Naive thymus-derived CD8-positive, alpha-beta T cell (primary cell): ENCODE measurements at regions of chr15 and their contacts with region 1.

Region 1: DNA sequence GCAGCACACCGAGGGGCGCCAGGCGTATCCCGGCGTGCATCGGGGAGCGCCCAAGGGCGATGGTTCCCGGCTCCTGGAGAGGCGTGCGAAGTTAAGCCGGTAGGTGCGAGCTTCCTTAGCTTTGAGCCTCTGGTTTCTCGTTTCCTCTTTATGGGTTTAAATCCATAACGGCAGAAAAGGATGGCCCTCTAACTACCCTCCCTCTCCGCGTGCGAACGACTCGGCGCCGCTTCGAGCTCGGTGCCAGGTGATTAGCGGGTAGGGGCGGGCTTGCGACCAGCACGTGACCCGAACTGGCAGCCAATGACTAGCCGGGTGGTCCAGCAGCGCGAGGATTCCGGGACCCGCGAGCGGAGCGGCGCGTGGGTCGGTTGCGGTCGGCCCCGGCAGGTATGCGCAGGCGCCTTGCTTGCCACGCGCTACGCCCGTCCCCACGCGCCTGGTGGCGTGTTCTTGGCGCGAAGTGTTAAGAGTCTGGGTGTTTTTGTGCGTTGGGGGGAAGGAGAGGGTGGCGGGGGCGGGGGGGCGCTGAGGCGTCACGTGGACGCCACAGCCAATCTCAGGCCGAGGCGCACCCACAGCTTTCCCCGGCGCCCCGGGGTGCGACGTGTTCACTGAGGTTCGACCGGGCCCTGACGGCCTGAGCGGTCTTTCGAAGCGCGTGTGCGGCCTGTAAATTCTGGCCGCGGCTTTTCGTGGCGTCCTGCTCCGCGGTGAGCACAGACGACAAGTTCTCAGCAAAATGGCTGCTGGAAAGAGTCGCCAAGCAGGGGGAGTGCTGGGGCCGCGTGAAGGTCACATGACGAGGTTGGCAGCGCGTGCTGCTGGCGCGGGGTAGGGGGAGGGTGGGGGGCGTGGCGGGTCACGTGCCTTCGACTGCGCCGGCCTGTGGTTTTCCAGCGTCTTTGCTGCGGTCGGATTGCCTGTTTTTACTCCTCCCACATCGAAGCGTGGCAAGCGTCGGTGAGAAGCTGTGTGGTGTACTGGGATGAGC is 38.7 kb upstream of the MGA start:
- DNase-seq: peak; percentile 65 to 91 (median 80)
- ATAC-seq: peak; percentile 85 to 87
- H3K4me3 Mint-ChIP-seq: peak overlapping the region; percentile 72 to 85 (median 80)
- H3K27ac Mint-ChIP-seq: peak overlapping the region; percentile 51 to 91 (median 88)
- H3K4me1 Mint-ChIP-seq: peaks cover 5 to 22% (median 14%) of the 10 kb centered on the region in 4 donors
- H3K27me3 Mint-ChIP-seq: no peaks in the 10 kb centered on the region

Region 2: DNA sequence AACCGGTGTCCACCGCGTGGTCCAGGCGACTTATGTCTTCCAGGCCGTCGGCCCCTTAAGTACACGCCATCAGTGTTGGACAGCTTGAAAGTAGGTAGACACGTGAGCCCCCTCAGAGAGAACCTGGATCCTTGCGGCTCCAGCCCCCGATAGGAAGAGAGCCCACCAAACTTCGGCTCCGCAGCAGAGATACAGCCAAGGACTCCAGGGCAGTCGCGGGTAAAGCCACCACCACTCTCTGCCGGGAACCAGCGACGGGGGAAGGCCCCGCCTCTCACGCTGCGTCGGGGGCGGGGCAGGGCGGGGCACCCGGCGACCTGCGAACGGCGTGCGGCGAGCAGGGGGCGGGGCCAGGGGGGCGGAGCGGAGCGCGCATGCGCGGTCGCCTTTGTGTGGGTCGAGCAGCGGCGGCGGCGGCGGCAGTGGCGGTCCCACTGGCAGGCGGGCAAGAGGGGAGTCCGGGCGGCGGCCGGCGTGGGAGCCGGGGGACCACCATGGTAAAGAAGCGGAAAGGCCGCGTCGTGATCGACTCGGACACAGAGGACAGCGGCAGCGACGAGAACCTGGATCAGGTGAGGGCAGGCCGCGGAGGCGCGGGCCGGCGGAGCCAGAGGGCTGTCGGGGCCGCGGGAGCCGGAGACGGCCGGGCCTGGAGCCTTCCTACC is 204.6 kb before region 1 on chr15 and contains the start of gene RTF1:
- POLR2A ChIA-PET with region 1: no interaction called
- DNase-seq: peak; percentile 92 to 100 (median 97)
- ATAC-seq: peak; percentile 94 to 96
- H3K4me3 Mint-ChIP-seq: peak within 1 kb of the TSS; percentile 90 to 97 (median 95)
- H3K27ac Mint-ChIP-seq: peak within 1 kb of the TSS; percentile 93 to 97 (median 96)
- H3K4me1 Mint-ChIP-seq: peaks cover 24 to 49% (median 45%) of the 10 kb centered on the region in 4 donors
- H3K27me3 Mint-ChIP-seq: no peaks in the 10 kb centered on the region
- polyA plus RNA-seq, gene RTF1: 17.1 to 21.7 (median 19.2) TPM

Region 3: GRCh38 chr15:41585127-41586047 is 36.1 kb before region 1 on chr15:
- POLR2A ChIA-PET with region 1: no interaction called
- DNase-seq: peak in 6 of 10 donors; percentile 6 to 28 (median 17)
- ATAC-seq: peak; percentile 75 to 79
- H3K4me3 Mint-ChIP-seq: peak overlapping the region; percentile 71 to 86 (median 80)
- H3K27ac Mint-ChIP-seq: peak overlapping the region in 1 of 10 donors; percentile 29
- H3K4me1 Mint-ChIP-seq: peaks cover 5 to 8% (median 6%) of the 10 kb centered on the region in 4 donors
- H3K27me3 Mint-ChIP-seq: peaks cover 19 to 46% (median 30%) of the 10 kb centered on the region in 5 donors

Region 4: GRCh38 chr15:41610048-41610447 is 11.4 kb before region 1 on chr15:
- POLR2A ChIA-PET with region 1: no interaction called
- DNase-seq: no peak
- ATAC-seq: no peak
- H3K4me3 Mint-ChIP-seq: no peak overlapping the region
- H3K27ac Mint-ChIP-seq: no peak overlapping the region
- H3K4me1 Mint-ChIP-seq: no peaks in the 10 kb centered on the region
- H3K27me3 Mint-ChIP-seq: peaks cover 0 to 7% (median 4%) of the 10 kb centered on the region in 5 donors

Region 5: DNA sequence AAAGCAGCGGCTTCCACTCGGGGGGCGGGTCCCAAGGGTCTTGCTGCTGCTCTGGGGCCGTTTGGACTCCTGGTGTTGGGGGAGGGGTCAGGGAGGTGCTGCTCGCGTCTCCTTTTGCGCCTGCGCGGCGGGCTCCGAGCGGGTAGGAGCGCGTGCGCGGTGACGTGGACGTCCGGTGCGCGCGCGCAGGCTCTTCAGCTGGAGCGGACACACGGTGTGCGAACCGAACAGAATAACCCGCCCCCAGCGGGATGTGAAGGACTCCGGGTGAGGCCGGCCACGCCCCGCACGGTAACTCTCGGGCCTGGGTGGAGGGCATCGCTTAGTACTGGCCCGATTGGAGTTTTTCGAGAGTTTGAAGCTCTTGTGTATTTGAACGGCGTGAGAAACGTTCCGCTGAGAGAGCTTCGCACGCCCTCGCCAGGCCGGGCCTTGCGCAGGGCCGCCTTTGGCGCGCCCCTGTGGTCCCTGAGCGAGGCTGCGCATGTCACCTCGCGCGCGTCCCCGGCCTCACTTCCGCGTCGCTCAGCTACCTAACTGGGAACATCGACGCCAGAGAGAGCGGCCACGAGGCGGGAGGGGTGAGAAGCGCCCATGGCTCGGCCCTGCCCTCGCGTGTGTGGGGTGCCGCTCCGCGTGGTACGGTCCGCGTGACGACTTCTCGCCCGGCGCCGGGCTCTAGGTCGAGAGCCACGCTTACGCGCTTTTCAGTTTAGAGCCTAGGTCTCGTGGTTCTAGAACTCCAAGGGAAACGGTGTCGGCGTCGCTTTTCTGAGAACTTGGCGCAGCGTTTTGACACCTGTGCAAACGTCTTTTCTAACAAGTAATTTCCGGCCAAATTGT is 39.0 kb after region 1 on chr15 and contains the start of gene MGA:
- POLR2A ChIA-PET with region 1: interaction called, 23 read pairs
- DNase-seq: peak; percentile 80 to 94 (median 88)
- ATAC-seq: peak; percentile 80 to 81
- H3K4me3 Mint-ChIP-seq: peak within 1 kb of the TSS; percentile 83 to 99 (median 90)
- H3K27ac Mint-ChIP-seq: peak within 1 kb of the TSS; percentile 89 to 99 (median 95)
- H3K4me1 Mint-ChIP-seq: peaks cover 18 to 59% (median 50%) of the 10 kb centered on the region in 4 donors
- H3K27me3 Mint-ChIP-seq: no peaks in the 10 kb centered on the region
- polyA plus RNA-seq, gene MGA: 12.2 to 20.6 (median 13.3) TPM